Heart left ventricle (tissue), 16 donors: ENCODE measurements at regions of chr3 and their contacts with region 1.

Region 1: DNA sequence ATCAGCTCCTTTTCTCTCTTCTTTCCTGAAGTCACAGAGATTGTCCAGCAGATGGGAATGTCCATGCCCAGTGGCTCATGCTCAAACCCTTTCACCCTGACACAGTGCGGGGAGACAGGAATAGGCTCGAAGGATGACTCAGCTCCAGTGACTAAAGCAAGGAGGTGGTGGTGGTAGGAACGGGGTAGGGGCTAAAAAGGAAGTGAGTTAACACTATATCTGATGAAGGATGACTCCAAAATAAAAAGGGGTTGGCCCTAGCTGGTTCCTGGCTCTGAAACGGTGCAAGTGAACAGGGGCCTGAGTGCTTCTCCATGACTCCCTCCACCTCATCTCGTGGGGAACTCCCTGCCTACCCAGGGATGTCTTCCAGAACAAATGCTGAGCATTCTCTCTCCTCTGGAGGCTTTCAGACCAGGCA is 167.4 kb upstream of the LPP start:
- DNase-seq: no peak
- ATAC-seq: peak in 2 of 4 donors; percentile 10 to 37
- H3K4me3 ChIP-seq: no peak overlapping the region
- H3K27ac ChIP-seq: peak overlapping the region in 4 of 12 donors; percentile 11 to 63 (median 45)
- H3K4me1 ChIP-seq: peaks cover 0 to 27% (median 9%) of the 10 kb centered on the region in 12 donors
- H3K27me3 ChIP-seq: no peaks in the 10 kb centered on the region
- CTCF ChIP-seq: no peak
- POLR2A ChIP-seq: no peak

Region 2: GRCh38 chr3:188031121-188031520 is 44.6 kb after region 1 on chr3:
- intact Hi-C with region 1: loop called in 3 of 10 experiments (anchors 1 to 5 kb)
- DNase-seq: no peak
- ATAC-seq: no peak
- H3K4me3 ChIP-seq: no peak overlapping the region
- H3K27ac ChIP-seq: peak overlapping the region in 2 of 12 donors; percentile 9 to 21
- H3K4me1 ChIP-seq: peaks cover 0 to 12% (median 0%) of the 10 kb centered on the region in 12 donors
- H3K27me3 ChIP-seq: no peaks in the 10 kb centered on the region
- CTCF ChIP-seq: no peak
- POLR2A ChIP-seq: no peak

Region 3: GRCh38 chr3:188037216-188037718 is 50.7 kb after region 1 on chr3:
- intact Hi-C with region 1: loop called in 2 of 10 experiments (anchors 5 kb)
- DNase-seq: peak in 2 of 5 donors; percentile 36 to 40
- ATAC-seq: peak; percentile 71 to 85 (median 82)
- H3K4me3 ChIP-seq: peak overlapping the region in 3 of 12 donors; percentile 7 to 34 (median 26)
- H3K27ac ChIP-seq: peak overlapping the region in 7 of 12 donors; percentile 49 to 67 (median 61)
- H3K4me1 ChIP-seq: peaks cover 0 to 24% (median 1%) of the 10 kb centered on the region in 12 donors
- H3K27me3 ChIP-seq: no peaks in the 10 kb centered on the region
- CTCF ChIP-seq: peak in 11 of 12 donors; percentile 26 to 64 (median 49)
- POLR2A ChIP-seq: no peak

Region 4: DNA sequence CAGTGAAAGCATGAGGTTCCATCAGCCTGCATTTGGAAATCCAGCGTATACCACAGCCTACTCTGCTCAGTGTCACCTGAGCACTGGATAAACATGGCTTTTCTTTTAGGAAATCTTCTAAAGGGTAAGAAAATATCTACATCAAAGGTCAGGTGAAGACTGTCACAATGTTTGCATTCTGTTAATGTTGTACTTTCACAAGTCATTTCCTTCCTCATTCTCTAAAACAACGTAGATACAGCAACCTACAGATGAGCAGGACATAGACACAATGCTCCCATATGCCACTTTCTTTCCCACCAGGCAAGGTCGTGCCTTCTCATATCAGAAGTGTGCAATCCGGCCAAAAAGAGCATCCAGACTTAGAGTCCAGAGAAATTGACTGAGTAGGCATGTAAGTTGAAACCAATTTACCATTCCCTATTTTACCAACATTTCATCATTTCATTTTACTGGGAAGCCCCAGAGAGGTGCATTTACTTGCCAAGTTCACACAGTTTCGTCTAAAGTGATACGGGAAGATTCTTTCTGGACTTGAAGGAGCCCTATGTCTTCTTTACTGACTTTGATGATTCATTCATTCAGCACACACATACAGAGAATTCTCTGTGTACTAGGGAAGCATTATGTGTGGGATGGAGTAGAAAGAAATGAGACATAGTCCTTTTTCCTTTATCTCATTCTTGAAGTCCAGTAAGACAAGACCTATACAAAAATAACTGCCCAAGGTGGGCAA is 136.8 kb after region 1 on chr3:
- intact Hi-C with region 1: no loop called
- DNase-seq: no peak
- ATAC-seq: no peak
- H3K4me3 ChIP-seq: no peak overlapping the region
- H3K27ac ChIP-seq: peak overlapping the region in 4 of 12 donors; percentile 3 to 58 (median 10)
- H3K4me1 ChIP-seq: peaks cover 0 to 17% (median 3%) of the 10 kb centered on the region in 12 donors
- H3K27me3 ChIP-seq: no peaks in the 10 kb centered on the region
- CTCF ChIP-seq: no peak
- POLR2A ChIP-seq: no peak